CD4-positive, alpha-beta memory T cell (primary cell): ENCODE measurements at regions of chr6 and their contacts with region 1.

Region 1: DNA sequence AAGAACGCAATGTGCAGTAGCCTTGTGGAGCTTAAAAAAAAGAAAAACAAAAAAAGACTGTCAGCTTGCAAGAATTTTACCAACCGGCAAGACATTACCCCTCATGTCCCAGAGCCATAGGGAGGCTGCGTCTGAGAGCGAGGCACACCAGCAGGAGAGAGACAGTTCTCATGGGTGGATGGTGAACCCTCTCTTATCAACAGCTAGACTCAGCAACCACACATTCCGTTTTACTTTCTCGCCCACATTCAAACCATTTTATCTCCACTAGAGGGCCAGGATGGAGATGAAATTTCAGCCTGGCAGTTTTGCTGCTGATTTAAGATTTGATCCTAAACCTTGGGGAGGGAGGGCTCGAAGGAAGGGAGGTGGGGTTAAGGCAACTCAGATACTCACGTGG is 247.0 kb downstream of the ATXN1 start:
- DNase-seq: peak in 4 of 5 donors; percentile 39 to 48 (median 42)
- H3K4me3 ChIP-seq: no peak overlapping the region
- H3K4me3 Mint-ChIP-seq: peak overlapping the region in 4 of 8 donors; percentile 22 to 65 (median 34)
- H3K27ac ChIP-seq: no peak overlapping the region
- H3K27ac Mint-ChIP-seq: peak overlapping the region; percentile 49 to 95 (median 85)
- H3K4me1 ChIP-seq: peaks cover 54% of the 10 kb centered on the region
- H3K4me1 Mint-ChIP-seq: peaks cover 53 to 73% (median 65%) of the 10 kb centered on the region in 4 donors
- H3K27me3 ChIP-seq: no peaks in the 10 kb centered on the region
- H3K27me3 Mint-ChIP-seq: no peaks in the 10 kb centered on the region

Region 2: GRCh38 chr6:16332175-16332542 is 182.1 kb before region 1 on chr6:
- CTCF ChIA-PET with region 1: interaction called, 17 read pairs
- POLR2A ChIA-PET with region 1: interaction called, 3 read pairs
- intact Hi-C with region 1: loop called (anchors 5 kb)
- DNase-seq: peak; percentile 77 to 86 (median 79)
- H3K4me3 ChIP-seq: no peak overlapping the region
- H3K4me3 Mint-ChIP-seq: no peak overlapping the region
- H3K27ac ChIP-seq: peak overlapping the region; percentile 50
- H3K27ac Mint-ChIP-seq: no peak overlapping the region
- H3K4me1 ChIP-seq: peaks cover 18% of the 10 kb centered on the region
- H3K4me1 Mint-ChIP-seq: peaks cover 0 to 20% (median 8%) of the 10 kb centered on the region in 4 donors
- H3K27me3 ChIP-seq: no peaks in the 10 kb centered on the region
- H3K27me3 Mint-ChIP-seq: no peaks in the 10 kb centered on the region

Region 3: GRCh38 chr6:16446273-16446672 is 68.0 kb before region 1 on chr6:
- CTCF ChIA-PET with region 1: no interaction called
- POLR2A ChIA-PET with region 1: no interaction called
- intact Hi-C with region 1: no loop called
- DNase-seq: no peak
- H3K4me3 ChIP-seq: no peak overlapping the region
- H3K4me3 Mint-ChIP-seq: no peak overlapping the region
- H3K27ac ChIP-seq: no peak overlapping the region
- H3K27ac Mint-ChIP-seq: peak overlapping the region in 4 of 7 donors; percentile 33 to 67 (median 57)
- H3K4me1 ChIP-seq: peaks cover 8% of the 10 kb centered on the region
- H3K4me1 Mint-ChIP-seq: peaks cover 14 to 34% (median 27%) of the 10 kb centered on the region in 4 donors
- H3K27me3 ChIP-seq: no peaks in the 10 kb centered on the region
- H3K27me3 Mint-ChIP-seq: no peaks in the 10 kb centered on the region

Region 4: GRCh38 chr6:16487996-16488674 is 26.1 kb before region 1 on chr6:
- CTCF ChIA-PET with region 1: interaction called, 20 read pairs
- POLR2A ChIA-PET with region 1: interaction called, 3 read pairs
- intact Hi-C with region 1: no loop called
- DNase-seq: peak in 4 of 5 donors; percentile 31 to 54 (median 34)
- H3K4me3 ChIP-seq: no peak overlapping the region
- H3K4me3 Mint-ChIP-seq: peak overlapping the region in 7 of 8 donors; percentile 15 to 81 (median 69)
- H3K27ac ChIP-seq: peak overlapping the region; percentile 56
- H3K27ac Mint-ChIP-seq: peak overlapping the region; percentile 73 to 97 (median 91)
- H3K4me1 ChIP-seq: peaks cover 74% of the 10 kb centered on the region
- H3K4me1 Mint-ChIP-seq: peaks cover 71 to 88% (median 79%) of the 10 kb centered on the region in 4 donors
- H3K27me3 ChIP-seq: no peaks in the 10 kb centered on the region
- H3K27me3 Mint-ChIP-seq: no peaks in the 10 kb centered on the region

Region 5: DNA sequence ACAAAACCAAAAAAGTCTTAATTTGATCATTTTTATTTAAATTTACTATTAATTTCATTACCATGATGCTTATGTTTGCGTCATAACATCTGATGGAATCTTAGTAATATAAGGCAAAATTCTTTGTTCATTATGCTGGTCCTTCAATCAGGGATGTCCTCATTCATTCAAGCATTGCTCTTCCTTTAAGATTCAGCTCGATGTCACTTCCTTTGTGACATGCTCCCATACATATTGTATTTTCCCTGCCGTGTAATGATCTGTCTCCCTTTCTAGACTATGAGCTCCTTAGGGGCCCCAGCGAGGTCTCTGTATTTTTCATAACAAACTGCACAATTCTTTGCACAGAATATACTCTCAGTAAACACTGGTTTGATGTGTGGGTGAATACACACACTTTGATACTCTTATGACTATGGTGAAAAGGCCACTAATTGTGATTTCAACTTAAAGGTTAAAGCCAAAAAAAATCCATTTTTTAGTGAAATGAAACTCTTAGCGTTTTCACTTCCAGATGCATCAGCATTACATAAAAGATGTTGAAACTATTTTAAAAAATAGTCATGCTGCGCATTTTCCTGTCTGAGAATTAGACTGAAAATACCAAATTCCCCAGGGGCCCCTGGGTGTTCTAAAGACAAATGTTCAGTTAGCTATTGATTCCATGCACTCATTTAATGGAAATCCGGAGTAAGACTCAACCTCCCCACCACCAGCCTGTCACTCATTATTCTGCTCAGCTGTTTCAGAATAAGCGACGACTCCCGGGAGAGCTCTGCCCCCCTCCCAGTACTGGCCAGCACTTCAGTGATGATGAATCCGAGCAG is 77.4 kb after region 1 on chr6:
- CTCF ChIA-PET with region 1: interaction called, 10 read pairs
- POLR2A ChIA-PET with region 1: no interaction called
- intact Hi-C with region 1: no loop called
- DNase-seq: no peak
- H3K4me3 ChIP-seq: no peak overlapping the region
- H3K4me3 Mint-ChIP-seq: no peak overlapping the region
- H3K27ac ChIP-seq: no peak overlapping the region
- H3K27ac Mint-ChIP-seq: peak overlapping the region in 5 of 7 donors; percentile 4 to 55 (median 42)
- H3K4me1 ChIP-seq: peaks cover 8% of the 10 kb centered on the region
- H3K4me1 Mint-ChIP-seq: peaks cover 21 to 35% (median 30%) of the 10 kb centered on the region in 4 donors
- H3K27me3 ChIP-seq: no peaks in the 10 kb centered on the region
- H3K27me3 Mint-ChIP-seq: no peaks in the 10 kb centered on the region

Region 6: DNA sequence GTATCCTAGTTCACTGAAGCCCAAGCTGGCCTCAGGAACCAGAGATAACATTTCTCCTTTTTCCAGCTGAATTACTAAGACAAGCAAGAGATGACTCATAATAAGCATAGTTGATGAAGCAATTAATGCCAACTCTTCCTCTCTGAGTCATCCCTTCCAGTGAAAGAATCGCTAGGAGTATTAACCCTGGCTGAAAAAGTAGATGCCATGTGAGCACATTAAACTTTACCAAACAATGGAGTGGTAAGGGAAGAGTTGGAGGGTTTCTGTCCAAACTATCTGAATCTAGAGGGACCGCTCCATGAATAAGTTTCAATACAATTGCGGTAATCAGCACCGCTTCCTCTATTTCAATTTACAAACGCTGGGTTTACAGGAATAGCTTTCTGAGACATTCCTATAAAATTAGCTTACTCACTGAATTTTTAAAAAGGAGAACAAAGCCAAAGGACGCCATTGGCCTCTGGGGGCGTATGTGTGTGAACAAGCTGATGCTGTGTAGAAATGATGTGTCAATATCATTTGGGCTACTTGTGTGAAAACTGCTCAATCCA is 198.8 kb after region 1 on chr6:
- CTCF ChIA-PET with region 1: interaction called, 81 read pairs
- POLR2A ChIA-PET with region 1: interaction called, 3 read pairs
- intact Hi-C with region 1: loop called (anchors 1 kb)
- DNase-seq: peak in 1 of 5 donors; percentile 62
- H3K4me3 ChIP-seq: peak overlapping the region; percentile 33 to 45
- H3K4me3 Mint-ChIP-seq: peak overlapping the region; percentile 70 to 89 (median 80)
- H3K27ac ChIP-seq: peak overlapping the region; percentile 67
- H3K27ac Mint-ChIP-seq: peak overlapping the region; percentile 74 to 95 (median 88)
- H3K4me1 ChIP-seq: peaks cover 36% of the 10 kb centered on the region
- H3K4me1 Mint-ChIP-seq: peaks cover 31 to 54% (median 43%) of the 10 kb centered on the region in 4 donors
- H3K27me3 ChIP-seq: no peaks in the 10 kb centered on the region
- H3K27me3 Mint-ChIP-seq: no peaks in the 10 kb centered on the region

Region 7: DNA sequence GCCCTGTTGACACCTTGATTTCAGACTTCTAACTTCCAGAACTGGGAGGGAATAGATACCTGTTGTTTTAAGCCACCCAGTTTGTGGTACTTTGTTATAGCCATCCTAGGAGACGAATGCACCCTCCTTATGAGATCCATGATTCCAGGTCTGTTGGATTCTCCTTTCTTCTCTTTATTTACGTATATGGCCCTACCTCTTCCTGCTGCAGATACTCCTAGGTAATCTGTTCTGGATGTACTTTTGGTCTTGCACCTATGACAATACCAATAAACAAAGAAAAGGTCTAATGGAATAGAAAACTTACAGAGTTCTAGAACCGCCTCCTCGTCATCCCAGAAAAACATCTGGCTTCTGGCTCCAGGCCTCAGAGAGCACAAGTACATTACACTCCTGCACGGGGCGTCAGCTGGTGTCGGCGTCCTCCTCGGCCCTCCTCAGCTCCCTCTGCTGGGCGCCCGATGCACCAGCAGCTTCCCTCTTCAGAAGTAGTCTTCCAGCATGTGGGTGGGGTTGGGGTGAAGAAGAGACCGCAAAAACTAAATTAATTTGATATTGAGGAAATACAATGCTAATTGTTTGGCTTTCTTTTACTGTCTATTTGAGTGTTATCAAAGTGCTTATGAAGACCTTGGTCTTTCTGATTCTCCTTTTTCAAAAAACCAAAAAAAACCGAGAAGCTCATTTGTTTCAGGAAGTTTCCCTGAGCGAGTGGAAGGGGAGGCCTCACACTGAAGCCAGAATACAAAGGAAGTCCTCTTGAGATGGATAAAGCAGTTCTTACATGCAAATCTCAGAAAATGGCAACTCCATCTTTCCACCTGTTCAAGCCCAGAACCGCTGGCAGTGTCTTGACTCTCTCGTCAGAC is 256.7 kb after region 1 on chr6:
- CTCF ChIA-PET with region 1: interaction called, 83 read pairs
- POLR2A ChIA-PET with region 1: no interaction called
- intact Hi-C with region 1: no loop called
- DNase-seq: peak; percentile 75 to 79 (median 77)
- H3K4me3 ChIP-seq: no peak overlapping the region
- H3K4me3 Mint-ChIP-seq: peak overlapping the region in 6 of 8 donors; percentile 30 to 71 (median 46)
- H3K27ac ChIP-seq: no peak overlapping the region
- H3K27ac Mint-ChIP-seq: peak overlapping the region; percentile 80 to 95 (median 91)
- H3K4me1 ChIP-seq: peaks cover 36% of the 10 kb centered on the region
- H3K4me1 Mint-ChIP-seq: peaks cover 30 to 56% (median 41%) of the 10 kb centered on the region in 4 donors
- H3K27me3 ChIP-seq: no peaks in the 10 kb centered on the region
- H3K27me3 Mint-ChIP-seq: no peaks in the 10 kb centered on the region